ENCODE measurements at regions of chr1 and their contacts with region 1.

Region 1: DNA sequence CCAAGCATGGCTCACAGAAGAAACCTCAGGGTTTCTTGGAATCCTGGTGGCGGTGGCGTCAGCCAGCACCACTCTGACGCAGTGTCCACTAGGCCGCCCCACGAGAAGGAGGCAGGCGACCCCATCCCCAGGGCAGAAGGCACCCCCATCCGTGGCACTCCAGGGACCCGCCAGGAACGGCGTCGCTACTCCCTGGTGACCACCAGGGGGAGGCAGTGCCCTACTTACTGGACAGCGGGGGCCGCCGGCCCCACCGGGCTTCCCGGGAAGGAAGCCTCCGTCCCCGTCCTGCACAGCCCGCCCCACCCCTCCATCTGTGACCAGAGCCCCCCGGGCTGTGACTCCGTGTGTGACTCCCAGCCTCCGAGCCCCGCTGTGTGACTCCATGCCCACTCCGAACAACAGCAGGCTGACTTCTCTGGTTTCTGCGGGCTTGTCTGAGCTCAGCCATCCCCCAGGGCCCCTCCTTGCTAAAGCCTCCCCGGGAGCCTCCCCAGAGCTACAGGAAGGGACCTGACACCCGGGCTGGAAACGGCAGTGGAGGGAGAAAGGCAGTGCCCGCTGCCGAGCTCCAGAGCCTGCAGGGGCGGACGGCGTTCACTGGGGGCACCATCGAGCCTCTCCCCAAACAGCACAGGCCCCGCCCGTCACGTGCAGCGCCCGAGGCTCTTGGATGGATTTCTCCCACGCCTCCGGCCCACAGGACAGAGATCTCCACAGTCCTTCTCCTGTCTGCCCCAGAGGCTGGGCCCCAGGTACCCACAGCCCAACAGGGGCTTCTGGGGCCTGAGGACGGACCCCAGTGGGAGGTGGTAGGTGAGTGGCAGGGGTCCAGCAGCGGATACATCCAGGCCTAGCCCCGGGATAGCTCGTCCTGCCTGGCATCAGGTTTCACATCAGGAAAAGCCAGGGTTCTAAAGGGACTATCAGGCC is 21.1 kb downstream of the KIF17 start:
- DNase-seq: peak; percentile 70
- H3K4me3 ChIP-seq: peak overlapping the region; percentile 70
- CTCF ChIP-seq: peak; percentile 90

Region 2: DNA sequence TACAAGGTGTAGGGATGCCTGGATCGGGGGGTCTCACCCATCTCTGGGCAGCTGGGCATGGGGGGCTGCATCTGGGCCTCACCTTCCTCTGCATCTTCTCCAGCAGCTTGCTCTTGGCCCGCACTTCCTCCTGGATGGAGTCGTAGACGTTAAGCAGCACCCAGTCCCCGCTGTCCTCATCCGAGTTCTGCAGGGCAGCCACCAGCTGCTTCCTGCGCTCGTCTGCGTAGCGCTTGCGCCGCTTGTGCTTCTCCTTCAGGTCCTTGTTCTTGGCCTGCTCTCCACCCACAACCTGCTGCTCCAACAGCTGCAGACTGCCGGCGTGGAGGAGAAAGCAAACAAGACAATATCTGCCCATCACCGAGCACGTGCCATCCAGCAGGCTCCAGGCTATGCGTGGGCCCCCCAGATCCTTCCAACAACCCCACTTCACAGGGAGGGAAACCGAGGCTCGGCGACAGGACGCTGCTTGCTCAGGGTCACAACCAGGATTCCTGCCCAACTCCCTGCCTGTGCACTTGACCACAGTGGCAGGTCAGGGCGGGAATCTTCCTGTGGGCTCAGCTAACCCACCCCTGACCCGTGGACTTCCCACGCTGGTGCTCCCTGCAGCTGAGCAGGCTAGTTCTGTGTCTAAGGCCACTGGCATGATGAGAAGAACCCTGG is 14.0 kb before region 1 on chr1:
- CTCF ChIA-PET with region 1: interaction called, 16 read pairs
- POLR2A ChIA-PET with region 1: no interaction called
- DNase-seq: no peak
- H3K4me3 ChIP-seq: no peak overlapping the region
- CTCF ChIP-seq: no peak

Region 3: GRCh38 chr1:20716232-20716631 is 19.6 kb after region 1 on chr1:
- CTCF ChIA-PET with region 1: interaction called, 12 read pairs
- POLR2A ChIA-PET with region 1: interaction called, 3 read pairs
- DNase-seq: no peak
- H3K4me3 ChIP-seq: no peak overlapping the region
- CTCF ChIP-seq: no peak

Region 4: DNA sequence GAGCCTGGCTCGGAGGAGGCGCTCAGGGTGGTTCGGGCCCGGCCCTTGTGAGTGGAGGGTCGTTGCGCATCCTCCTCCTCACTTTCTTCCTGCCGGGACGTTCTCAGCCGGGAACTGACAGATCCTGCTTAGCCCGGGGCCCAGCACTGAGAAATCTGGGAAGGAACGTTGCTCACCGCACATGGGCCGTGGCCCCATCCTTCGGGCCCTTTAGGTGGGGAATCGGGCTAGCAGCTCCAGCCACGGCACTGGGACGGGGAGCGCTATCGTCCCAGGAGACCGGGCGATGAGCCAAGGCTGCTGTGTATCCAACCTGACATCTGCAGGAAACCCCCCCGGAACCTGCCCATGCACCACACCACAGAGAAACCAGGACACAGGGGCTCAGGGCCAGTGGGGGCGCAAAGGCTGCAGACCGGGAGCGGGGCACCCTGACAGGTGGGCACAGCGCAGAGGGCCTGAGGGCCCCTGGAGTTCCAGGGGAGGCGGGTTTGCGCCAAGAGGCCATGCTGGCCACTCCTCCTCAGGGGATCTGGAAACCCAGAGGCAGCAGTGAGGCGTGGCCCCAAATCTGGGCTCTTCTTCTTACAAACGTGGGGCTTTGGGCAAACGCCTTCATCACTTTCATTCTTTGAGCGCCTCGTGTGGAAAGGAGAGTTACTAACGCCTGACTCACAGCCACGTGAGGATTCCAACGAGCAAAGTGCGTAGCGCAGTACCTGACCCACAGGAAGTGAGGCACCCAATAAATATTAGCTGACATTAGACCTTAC is 36.1 kb after region 1 on chr1 and contains the start of gene SH2D5:
- CTCF ChIA-PET with region 1: interaction called, 13 read pairs
- POLR2A ChIA-PET with region 1: no interaction called
- DNase-seq: peak; percentile 91
- H3K4me3 ChIP-seq: peak within 1 kb of the TSS; percentile 62
- CTCF ChIP-seq: peak; percentile 36

Region 5: GRCh38 chr1:20786253-20787028 is 89.8 kb after region 1 on chr1:
- CTCF ChIA-PET with region 1: interaction called, 12 read pairs
- POLR2A ChIA-PET with region 1: interaction called, 17 read pairs
- DNase-seq: peak; percentile 23
- H3K4me3 ChIP-seq: peak overlapping the region; percentile 96
- CTCF ChIP-seq: no peak

Region 6: GRCh38 chr1:20896871-20897223 is 200.2 kb after region 1 on chr1:
- CTCF ChIA-PET with region 1: no interaction called
- POLR2A ChIA-PET with region 1: no interaction called
- DNase-seq: no peak
- H3K4me3 ChIP-seq: no peak overlapping the region
- CTCF ChIP-seq: no peak

Measured in AG04449 (cell line).